ENCODE measurements at regions of chr1 and their contacts with region 1.

Region 1: GRCh38 chr1:37595440-37596319 is at the start of gene GNL2:
- DNase-seq: peak; percentile 93 to 99 (median 97)

Region 2: DNA sequence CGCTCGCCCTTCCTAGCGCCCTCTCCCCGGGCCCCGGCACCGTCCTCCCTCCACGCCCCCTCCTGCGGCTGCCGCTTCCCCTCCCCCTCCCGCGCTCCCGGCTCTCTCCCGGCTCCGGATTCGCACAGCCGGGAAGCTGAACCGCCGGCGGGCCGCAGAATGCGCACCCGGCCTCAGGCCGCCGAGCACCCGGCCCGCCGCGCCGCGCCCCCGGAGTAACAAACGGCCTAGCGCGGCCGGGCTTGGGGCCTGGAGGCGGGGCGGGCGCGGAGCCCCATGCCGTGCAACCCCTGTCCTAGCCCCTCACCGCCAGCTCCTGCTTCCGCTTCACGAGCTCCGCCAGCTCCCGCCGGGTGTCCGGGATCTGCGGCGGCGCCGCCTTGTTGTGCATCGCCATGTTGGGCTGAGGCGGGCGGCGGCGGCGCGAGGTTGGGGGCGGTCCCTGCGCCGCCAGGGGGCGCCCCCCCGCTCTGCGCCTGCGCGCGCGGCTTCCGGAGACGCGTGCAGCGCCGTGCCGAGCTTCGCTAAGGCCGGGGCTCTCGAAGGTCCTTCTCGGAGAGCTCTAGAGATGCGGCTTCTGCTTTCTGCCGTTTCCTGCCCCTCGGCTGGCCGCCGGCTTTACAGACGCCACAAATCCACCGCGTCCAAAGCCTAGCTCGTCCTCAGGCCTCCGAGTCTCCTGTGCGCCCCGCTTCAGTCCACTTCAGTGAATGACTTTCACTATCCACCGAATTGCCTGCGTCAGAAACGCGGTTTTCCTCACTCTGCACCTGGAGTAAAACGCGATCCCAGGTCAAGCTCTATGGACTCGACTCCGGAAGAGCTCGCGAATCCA is 81.1 kb before region 1 on chr1 and contains the start of gene MEAF6:
- intact Hi-C with region 1: loop called (anchors 5 kb)
- DNase-seq: peak; percentile 33 to 92 (median 84)

Region 3: GRCh38 chr1:37556712-37557196 is 38.9 kb before region 1 on chr1 and contains the start of gene DNALI1:
- intact Hi-C with region 1: loop called (anchors 5 kb)
- DNase-seq: peak; percentile 74 to 94 (median 87)

Region 4: GRCh38 chr1:37682334-37682987 is 86.8 kb after region 1 on chr1:
- intact Hi-C with region 1: loop called (anchors 5 kb)
- DNase-seq: peak; percentile 26 to 93 (median 83)

Region 5: GRCh38 chr1:37922767-37923550 is 327.3 kb after region 1 on chr1:
- intact Hi-C with region 1: no loop called
- DNase-seq: peak in 4 of 42 donors; percentile 12 to 22 (median 16)

Measured in head of caudate nucleus (tissue), 42 donors.